Transverse colon (tissue), 4 donors: ENCODE measurements at regions of chr1 and their contacts with region 1.

Region 1: GRCh38 chr1:236673289-236673919 is 12.9 kb upstream of the ACTN2 start:
- DNase-seq: no peak
- H3K4me3 ChIP-seq: no peak overlapping the region
- H3K27ac ChIP-seq: no peak overlapping the region
- H3K4me1 ChIP-seq: no peaks in the 10 kb centered on the region
- H3K27me3 ChIP-seq: peaks cover 4% of the 10 kb centered on the region
- CTCF ChIP-seq: no peak
- EP300 ChIP-seq: no peak
- POLR2A ChIP-seq: no peak

Region 2: GRCh38 chr1:236451796-236452373 is 221.5 kb before region 1 on chr1:
- in situ Hi-C with region 1: no loop called
- intact Hi-C with region 1: no loop called
- DNase-seq: peak; percentile 16
- H3K4me3 ChIP-seq: no peak overlapping the region
- H3K27ac ChIP-seq: no peak overlapping the region
- H3K4me1 ChIP-seq: no peaks in the 10 kb centered on the region
- H3K27me3 ChIP-seq: no peaks in the 10 kb centered on the region
- CTCF ChIP-seq: peak in 4 of 5 experiments; percentile 20 to 39 (median 21)
- EP300 ChIP-seq: no peak
- POLR2A ChIP-seq: no peak

Region 3: DNA sequence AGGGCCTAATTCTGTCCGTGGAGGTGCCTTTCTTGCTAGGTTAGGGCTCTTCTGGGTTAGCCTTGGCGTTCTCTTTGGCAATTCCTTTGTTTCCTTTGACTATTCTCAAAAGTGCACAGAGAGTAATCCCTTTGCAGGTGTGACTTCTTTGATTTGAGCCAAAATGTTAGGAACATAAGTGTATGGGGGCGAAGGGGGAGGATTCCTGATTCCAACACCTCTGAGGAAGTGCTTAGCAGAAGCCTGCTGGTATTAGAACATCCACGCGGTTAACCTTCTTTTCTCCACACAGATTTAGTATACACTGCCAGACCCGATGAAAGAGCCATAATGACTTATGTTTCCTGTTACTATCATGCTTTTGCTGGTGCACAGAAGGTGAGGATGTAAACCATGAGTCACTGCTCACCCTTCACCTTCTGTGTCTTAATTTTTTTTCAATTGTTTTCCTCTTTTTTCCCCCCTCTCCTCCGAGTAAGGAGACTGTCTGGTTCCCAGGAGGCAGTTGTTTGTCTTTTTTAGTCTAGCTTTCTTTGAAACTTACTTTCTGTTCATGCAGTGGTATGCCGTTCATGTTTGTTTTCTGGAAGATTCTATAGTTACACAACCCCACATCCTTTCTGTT is 60.8 kb after region 1 on chr1:
- in situ Hi-C with region 1: no loop called
- intact Hi-C with region 1: loop called (anchors 2 kb)
- DNase-seq: no peak
- H3K4me3 ChIP-seq: no peak overlapping the region
- H3K27ac ChIP-seq: no peak overlapping the region
- H3K4me1 ChIP-seq: no peaks in the 10 kb centered on the region
- H3K27me3 ChIP-seq: no peaks in the 10 kb centered on the region
- CTCF ChIP-seq: no peak
- EP300 ChIP-seq: no peak
- POLR2A ChIP-seq: no peak